Transverse colon (tissue), 4 donors: ENCODE measurements at regions of chr4 and their contacts with region 1.

Region 1: DNA sequence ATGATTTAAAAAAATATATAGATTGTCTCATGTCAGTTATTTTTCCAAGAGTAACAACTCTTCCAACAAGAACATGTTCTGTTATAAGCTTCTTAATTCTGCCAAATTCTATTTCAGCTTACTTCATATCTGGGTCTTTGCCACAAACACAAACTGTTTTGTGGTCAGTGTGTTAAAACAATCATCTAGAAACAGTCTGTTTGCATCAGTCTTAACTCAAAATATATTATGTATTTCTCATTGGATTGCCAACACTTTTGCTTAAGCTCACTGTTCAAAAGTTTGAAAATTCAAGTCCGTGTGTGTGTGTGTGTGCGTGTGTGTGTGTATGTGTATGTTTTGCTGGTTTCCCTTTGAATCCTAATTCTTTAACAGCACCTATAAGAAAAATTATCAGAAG is 752.3 kb upstream of the NDST4 start:
- DNase-seq: no peak
- H3K4me3 ChIP-seq: no peak overlapping the region
- H3K27ac ChIP-seq: no peak overlapping the region
- H3K4me1 ChIP-seq: no peaks in the 10 kb centered on the region
- H3K27me3 ChIP-seq: no peaks in the 10 kb centered on the region
- CTCF ChIP-seq: no peak
- EP300 ChIP-seq: no peak
- POLR2A ChIP-seq: no peak

Region 2: DNA sequence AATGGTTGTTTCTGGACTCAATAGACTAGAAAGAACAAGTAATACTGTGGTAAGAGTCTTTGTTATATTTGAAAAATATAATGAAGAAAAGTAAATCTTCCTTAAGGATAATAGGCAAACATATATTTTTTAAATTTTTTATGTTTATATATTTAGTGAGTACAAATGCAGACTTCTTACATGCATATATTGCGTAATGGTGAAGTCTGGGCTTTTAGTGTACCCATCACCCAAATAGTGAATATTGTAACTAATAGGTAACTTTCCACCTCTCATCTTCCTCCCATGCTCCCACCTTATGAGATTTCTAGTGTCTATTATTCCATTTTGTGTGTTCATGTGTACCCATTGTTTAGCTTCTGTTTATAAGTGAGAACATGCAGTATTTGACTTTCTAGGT is 41.1 kb before region 1 on chr4:
- in situ Hi-C with region 1: no loop called
- intact Hi-C with region 1: loop called (anchors 5 kb)
- DNase-seq: no peak
- H3K4me3 ChIP-seq: no peak overlapping the region
- H3K27ac ChIP-seq: no peak overlapping the region
- H3K4me1 ChIP-seq: no peaks in the 10 kb centered on the region
- H3K27me3 ChIP-seq: no peaks in the 10 kb centered on the region
- CTCF ChIP-seq: no peak
- EP300 ChIP-seq: no peak
- POLR2A ChIP-seq: no peak